IMR-90 (cell line): ENCODE measurements at regions of chr14 and their contacts with region 1.

Region 1: GRCh38 chr14:69346710-69347109 is 51.4 kb downstream of the ERH start:
- DNase-seq: no peak
- ATAC-seq: peak; percentile 81
- H3K4me3 ChIP-seq: no peak overlapping the region
- H3K27ac ChIP-seq: no peak overlapping the region
- H3K4me1 ChIP-seq: no peaks in the 10 kb centered on the region
- H3K27me3 ChIP-seq: peaks cover 32% of the 10 kb centered on the region
- CTCF ChIP-seq: peak; percentile 59
- POLR2A ChIP-seq: no peak
- RAD21 ChIP-seq: peak; percentile 67

Region 2: DNA sequence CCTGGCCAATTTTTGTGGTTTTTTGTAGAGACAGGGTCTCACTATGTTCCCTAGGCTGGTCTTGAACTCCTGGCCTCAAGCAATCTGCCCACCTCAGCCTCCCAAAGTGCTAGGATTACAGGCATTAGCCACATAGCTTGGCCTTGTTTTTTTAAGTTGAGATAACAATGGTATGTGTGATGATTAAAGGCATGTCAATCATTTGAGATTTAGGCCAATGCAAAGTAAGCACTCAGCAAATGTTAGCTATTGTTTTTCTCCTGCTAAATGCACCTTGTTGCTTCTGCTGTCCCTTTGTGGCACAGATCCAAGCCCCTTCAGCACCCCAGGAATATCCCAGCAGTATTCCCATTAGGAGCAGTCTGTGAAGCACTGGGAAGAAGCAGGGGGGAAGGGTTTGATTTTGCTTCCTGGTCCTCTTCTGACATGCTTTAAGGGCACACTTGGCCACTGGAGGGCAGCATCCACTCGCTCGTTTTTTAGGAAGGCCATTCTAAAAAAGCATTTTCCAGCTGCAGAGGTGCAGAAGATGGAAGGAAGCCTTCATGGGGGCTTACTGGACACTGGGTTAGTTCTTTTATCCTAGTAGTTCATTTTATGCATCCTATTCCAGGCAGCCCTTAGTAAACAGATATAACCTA is 483.6 kb before region 1 on chr14:
- CTCF ChIA-PET with region 1: no interaction called
- POLR2A ChIA-PET with region 1: no interaction called
- dilution Hi-C with region 1: no loop called
- in situ Hi-C with region 1: no loop called
- intact Hi-C with region 1: loop called (anchors 5 kb)
- DNase-seq: peak; percentile 81
- ATAC-seq: peak; percentile 73
- H3K4me3 ChIP-seq: no peak overlapping the region
- H3K27ac ChIP-seq: no peak overlapping the region
- H3K4me1 ChIP-seq: no peaks in the 10 kb centered on the region
- H3K27me3 ChIP-seq: no peaks in the 10 kb centered on the region
- CTCF ChIP-seq: peak; percentile 85
- POLR2A ChIP-seq: 0 out of 2 replicates have a peak, but pooled peaks have one; percentile 41
- RAD21 ChIP-seq: peak; percentile 75

Region 3: DNA sequence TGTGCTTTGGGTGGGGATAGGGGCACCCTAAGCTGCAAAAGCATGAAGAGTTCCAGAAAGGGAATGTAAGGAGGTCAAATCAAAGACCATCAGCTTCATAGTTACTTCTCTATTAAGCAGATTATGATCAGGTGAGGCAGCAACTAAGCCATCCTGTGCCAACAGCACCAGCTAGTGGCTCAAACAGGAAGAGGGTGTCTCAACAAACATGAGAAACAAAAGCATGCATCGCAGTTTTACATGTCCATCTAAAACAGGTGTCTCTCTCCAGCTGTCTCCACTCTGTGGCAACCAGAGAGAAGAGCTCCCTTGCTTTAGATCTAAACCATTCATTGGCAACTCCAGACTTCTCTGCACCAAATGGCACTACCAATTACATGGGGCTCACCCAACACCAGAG is 420.5 kb before region 1 on chr14:
- CTCF ChIA-PET with region 1: no interaction called
- POLR2A ChIA-PET with region 1: no interaction called
- dilution Hi-C with region 1: no loop called
- in situ Hi-C with region 1: no loop called
- intact Hi-C with region 1: no loop called
- DNase-seq: no peak
- ATAC-seq: no peak
- H3K4me3 ChIP-seq: no peak overlapping the region
- H3K27ac ChIP-seq: no peak overlapping the region
- H3K4me1 ChIP-seq: peaks cover 59% of the 10 kb centered on the region
- H3K27me3 ChIP-seq: no peaks in the 10 kb centered on the region
- CTCF ChIP-seq: peak; percentile 44
- POLR2A ChIP-seq: no peak
- RAD21 ChIP-seq: no peak

Region 4: DNA sequence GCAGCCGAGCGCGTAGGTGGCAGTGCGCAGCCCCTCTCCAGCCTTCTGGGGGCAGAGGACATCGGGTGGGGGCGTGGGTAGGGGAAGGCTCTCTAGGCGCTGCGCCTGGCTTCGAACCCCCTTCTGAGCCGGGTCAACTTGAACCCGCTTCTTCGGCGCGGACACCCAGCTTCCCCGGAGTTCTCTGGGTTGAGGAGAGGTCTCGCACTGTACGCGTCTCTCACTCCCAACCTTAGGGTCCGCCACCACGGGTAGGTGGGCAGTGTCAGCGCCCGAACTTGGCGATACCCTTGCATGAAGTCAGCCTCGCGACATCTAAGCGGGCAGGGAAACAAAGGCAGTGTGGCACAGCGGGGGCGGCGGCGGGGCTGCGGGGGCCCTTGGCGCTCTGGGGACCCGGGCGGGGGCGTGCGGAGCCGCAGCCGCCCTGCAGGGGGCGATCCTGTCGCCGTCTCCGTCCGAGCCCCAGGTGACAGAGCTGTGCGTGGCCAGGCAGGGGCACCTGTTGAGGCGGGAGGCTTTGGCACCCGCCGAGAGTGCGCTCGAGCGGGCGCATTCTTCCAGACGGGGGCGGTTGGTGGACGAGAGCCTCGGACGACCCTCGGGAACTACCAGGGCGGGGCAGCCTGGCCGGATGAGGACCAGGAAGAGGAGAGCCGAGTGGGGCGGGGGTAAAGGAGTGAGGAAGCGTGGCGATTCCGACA is 85.7 kb before region 1 on chr14:
- CTCF ChIA-PET with region 1: no interaction called
- POLR2A ChIA-PET with region 1: no interaction called
- dilution Hi-C with region 1: no loop called
- in situ Hi-C with region 1: no loop called
- intact Hi-C with region 1: loop called (anchors 5 kb)
- DNase-seq: no peak
- ATAC-seq: no peak; the same call in 1 of the 2 replicates
- H3K4me3 ChIP-seq: peak overlapping the region; percentile 2; the same call in 1 of the 2 replicates
- H3K27ac ChIP-seq: no peak overlapping the region
- H3K4me1 ChIP-seq: peaks cover 2% of the 10 kb centered on the region; the same call in 1 of the 2 replicates
- H3K27me3 ChIP-seq: peaks cover 60% of the 10 kb centered on the region
- CTCF ChIP-seq: peak; percentile 42
- POLR2A ChIP-seq: no peak
- RAD21 ChIP-seq: peak; percentile 31

Region 5: GRCh38 chr14:69376439-69376838 is 29.7 kb after region 1 on chr14:
- CTCF ChIA-PET with region 1: no interaction called
- POLR2A ChIA-PET with region 1: no interaction called
- dilution Hi-C with region 1: no loop called
- in situ Hi-C with region 1: no loop called
- intact Hi-C with region 1: loop called (anchors 1 kb)
- DNase-seq: peak; percentile 77
- ATAC-seq: peak; percentile 59; the same call in 1 of the 2 replicates
- H3K4me3 ChIP-seq: no peak overlapping the region
- H3K27ac ChIP-seq: no peak overlapping the region
- H3K4me1 ChIP-seq: no peaks in the 10 kb centered on the region
- H3K27me3 ChIP-seq: no peaks in the 10 kb centered on the region
- CTCF ChIP-seq: no peak
- POLR2A ChIP-seq: no peak
- RAD21 ChIP-seq: no peak

Region 6: DNA sequence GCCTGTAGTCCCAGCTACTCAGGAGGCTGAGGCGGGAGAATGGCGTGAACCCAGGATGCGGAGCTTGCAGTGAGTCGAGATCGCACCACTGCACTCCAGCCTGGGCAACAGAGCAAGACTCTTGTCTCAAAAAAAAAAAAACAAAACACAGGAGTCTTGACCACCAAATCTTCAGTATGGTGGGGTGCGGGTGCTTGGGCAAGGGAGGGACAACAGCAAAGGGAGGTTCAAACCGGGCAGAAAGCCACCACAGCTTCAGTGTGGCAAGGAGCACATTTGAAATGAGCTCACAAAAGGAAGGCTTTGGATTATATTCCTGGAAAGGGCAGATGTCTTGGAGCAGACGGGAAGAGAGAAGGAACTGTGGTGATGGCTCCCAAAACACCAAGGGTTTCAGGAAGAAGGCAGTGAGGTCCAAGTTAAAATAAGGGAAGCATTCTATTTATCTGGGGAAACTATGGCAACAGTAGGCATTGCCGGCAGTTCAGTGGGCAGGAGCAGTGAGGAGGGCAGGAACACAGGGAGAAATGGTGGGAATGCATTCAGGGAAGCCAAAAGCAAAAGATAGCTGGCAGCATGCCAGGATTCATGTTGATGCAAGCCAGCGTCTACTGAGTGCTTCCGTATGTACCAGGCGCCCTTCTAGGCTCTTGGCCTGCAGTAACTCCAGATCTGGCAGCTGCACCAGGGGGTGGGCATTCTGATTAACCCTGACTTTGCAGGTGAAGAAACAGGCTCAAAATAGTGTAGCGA is 369.2 kb after region 1 on chr14:
- CTCF ChIA-PET with region 1: no interaction called
- POLR2A ChIA-PET with region 1: no interaction called
- dilution Hi-C with region 1: no loop called
- in situ Hi-C with region 1: no loop called
- intact Hi-C with region 1: no loop called
- DNase-seq: peak; percentile 70
- ATAC-seq: peak; percentile 6
- H3K4me3 ChIP-seq: no peak overlapping the region
- H3K27ac ChIP-seq: peak overlapping the region; percentile 32
- H3K4me1 ChIP-seq: peaks cover 37% of the 10 kb centered on the region
- H3K27me3 ChIP-seq: no peaks in the 10 kb centered on the region
- CTCF ChIP-seq: no peak
- POLR2A ChIP-seq: no peak
- RAD21 ChIP-seq: no peak